ENCODE measurements at regions of chr1 and their contacts with region 1.

Region 1: DNA sequence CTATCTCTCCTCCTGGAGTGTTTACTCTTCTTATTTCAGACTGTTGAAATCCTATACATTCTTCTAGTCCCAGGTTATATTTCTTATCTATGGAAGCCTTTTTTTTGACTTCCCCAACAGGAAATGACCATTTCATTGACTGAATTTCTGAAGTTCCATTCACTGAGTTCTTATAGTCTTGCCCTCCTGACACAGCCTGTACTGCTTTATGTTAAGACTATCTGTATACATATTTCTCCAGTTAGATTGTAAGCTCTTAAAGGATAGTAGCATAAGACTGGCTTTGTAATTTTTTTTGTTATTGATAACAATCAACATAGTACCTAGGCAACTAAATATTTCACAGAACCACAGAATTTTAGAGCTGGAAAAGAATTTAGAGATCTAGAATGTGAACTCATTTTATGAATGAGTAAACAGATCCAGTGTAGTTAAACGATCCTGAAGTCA is 14.9 kb upstream of the MACF1 start:
- DNase-seq: peak; percentile 81
- H3K4me3 ChIP-seq: peak overlapping the region in 2 of 3 experiments; percentile 17 to 37
- H3K27ac ChIP-seq: peak overlapping the region; percentile 97
- H3K4me1 ChIP-seq: peaks cover 95% of the 10 kb centered on the region
- H3K27me3 ChIP-seq: no peaks in the 10 kb centered on the region
- CTCF ChIP-seq: no peak
- POLR2A ChIP-seq: no peak

Region 2: GRCh38 chr1:39151267-39151666 is 38.4 kb before region 1 on chr1:
- CTCF ChIA-PET with region 1: interaction called, 10 read pairs
- POLR2A ChIA-PET with region 1: interaction called, 7 read pairs
- dilution Hi-C with region 1: no loop called
- intact Hi-C with region 1: loop called (anchors 1 kb)
- DNase-seq: peak; percentile 59
- H3K4me3 ChIP-seq: peak overlapping the region in 2 of 3 experiments; percentile 10 to 40
- H3K27ac ChIP-seq: peak overlapping the region; percentile 80
- H3K4me1 ChIP-seq: peaks cover 73% of the 10 kb centered on the region
- H3K27me3 ChIP-seq: no peaks in the 10 kb centered on the region
- CTCF ChIP-seq: no peak
- POLR2A ChIP-seq: no peak

Region 3: DNA sequence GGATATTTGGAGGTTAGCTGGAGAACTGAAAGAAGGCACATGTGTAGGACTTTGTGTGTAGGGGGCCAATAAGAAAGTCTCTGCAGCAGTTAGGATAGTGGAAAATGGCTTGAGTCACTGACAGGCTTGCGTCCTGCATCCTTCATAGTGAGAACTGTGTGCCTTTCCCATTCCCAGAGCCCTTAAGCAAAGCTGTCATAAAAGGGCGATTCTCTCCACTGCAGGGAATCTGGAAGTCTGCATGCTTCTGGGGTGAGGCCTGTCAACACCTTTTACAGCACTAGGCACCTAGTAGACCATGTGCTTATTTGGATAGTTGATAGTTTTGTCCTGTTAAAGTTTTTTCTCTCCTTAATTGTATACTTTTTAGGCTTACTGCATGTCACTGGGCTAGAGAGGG is 24.6 kb before region 1 on chr1:
- CTCF ChIA-PET with region 1: interaction called, 33 read pairs
- POLR2A ChIA-PET with region 1: interaction called, 3 read pairs
- dilution Hi-C with region 1: no loop called
- intact Hi-C with region 1: no loop called
- DNase-seq: peak; percentile 45
- H3K4me3 ChIP-seq: no peak overlapping the region
- H3K27ac ChIP-seq: no peak overlapping the region
- H3K4me1 ChIP-seq: peaks cover 39% of the 10 kb centered on the region
- H3K27me3 ChIP-seq: no peaks in the 10 kb centered on the region
- CTCF ChIP-seq: no peak
- POLR2A ChIP-seq: no peak

Region 4: DNA sequence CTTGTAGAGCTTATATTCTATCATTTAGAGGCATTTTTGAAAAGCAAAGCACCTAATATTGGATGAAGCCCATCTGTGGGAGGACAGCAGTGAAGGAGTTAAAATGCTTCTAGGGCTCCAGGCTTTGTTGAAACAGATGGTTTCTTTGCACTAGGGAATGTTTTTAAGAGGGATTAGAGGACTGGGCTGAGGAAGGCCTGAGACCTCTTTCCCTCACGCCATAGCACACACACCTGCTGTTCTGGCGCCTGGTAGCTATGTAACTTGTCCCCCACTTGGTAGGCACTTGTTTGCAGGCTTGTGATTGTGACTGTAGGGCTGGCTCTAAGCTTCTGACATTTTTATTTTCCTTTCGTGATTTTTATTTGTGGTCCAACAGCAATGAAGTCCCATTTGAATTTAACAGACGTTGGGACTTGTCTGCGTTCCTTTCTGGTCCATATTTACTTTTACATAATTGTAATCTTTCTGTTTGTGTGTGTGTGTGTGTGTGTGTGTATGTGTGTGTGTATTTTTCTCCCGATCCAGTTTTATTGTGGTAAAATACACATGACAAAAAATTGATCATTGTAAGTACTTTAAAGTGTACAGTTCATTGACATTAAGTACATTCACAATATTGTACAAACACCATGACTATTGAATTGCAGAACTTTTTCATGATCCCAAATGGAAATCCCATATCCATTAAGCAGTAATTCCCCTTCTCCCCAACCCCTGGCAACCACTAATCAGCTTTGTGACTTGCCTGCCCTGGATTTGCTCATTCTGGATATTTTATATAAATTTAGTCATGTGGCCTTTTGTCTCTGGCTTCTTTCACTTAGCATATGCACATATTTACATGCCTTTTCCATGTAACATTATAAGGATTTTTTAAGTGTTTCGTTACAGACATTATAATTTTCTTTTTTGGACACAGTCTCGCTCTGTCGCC is 18.6 kb before region 1 on chr1:
- CTCF ChIA-PET with region 1: interaction called, 51 read pairs
- POLR2A ChIA-PET with region 1: interaction called, 4 read pairs
- dilution Hi-C with region 1: no loop called
- intact Hi-C with region 1: no loop called
- DNase-seq: no peak
- H3K4me3 ChIP-seq: no peak overlapping the region
- H3K27ac ChIP-seq: no peak overlapping the region
- H3K4me1 ChIP-seq: peaks cover 20% of the 10 kb centered on the region
- H3K27me3 ChIP-seq: no peaks in the 10 kb centered on the region
- CTCF ChIP-seq: no peak
- POLR2A ChIP-seq: no peak

Region 5: DNA sequence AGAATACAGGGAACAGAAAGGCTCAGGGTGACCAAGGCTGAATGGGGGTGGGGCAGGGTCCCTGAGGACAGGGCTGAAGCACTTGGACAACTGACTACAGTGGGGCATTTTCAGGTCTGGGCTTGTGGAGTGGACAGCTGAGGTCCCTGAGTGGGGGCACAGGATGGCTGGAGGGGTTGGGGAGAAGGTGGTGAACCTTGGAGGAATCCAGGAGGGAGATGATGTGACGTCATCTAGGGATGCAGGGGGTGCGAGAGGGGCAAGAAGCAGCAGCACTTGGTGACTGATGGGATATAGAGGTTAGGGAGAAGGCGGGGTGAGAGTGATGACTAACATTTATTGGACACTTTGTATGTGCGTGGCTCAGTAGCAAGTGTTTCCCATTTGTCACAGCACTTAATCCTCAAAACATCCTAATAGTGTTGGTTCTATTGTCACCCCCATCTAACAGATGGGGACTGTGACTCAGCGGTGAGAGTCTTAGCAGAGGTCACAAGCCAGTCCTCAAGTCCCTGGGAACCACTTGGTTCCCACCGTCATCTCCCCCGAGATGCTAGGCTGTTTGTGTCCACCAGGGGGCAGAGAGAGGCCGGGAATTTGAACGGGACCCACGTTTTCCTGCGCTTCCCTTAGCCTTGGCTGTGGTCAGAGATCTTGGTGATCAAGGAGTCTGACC is 626.9 kb after region 1 on chr1:
- CTCF ChIA-PET with region 1: no interaction called
- POLR2A ChIA-PET with region 1: no interaction called
- dilution Hi-C with region 1: no loop called
- intact Hi-C with region 1: no loop called
- DNase-seq: peak; percentile 78
- H3K4me3 ChIP-seq: no peak overlapping the region
- H3K27ac ChIP-seq: no peak overlapping the region
- H3K4me1 ChIP-seq: no peaks in the 10 kb centered on the region
- H3K27me3 ChIP-seq: no peaks in the 10 kb centered on the region
- CTCF ChIP-seq: peak; percentile 77 to 78
- POLR2A ChIP-seq: no peak